ENCODE measurements at regions of chr7 and their contacts with region 1.

Region 1: DNA sequence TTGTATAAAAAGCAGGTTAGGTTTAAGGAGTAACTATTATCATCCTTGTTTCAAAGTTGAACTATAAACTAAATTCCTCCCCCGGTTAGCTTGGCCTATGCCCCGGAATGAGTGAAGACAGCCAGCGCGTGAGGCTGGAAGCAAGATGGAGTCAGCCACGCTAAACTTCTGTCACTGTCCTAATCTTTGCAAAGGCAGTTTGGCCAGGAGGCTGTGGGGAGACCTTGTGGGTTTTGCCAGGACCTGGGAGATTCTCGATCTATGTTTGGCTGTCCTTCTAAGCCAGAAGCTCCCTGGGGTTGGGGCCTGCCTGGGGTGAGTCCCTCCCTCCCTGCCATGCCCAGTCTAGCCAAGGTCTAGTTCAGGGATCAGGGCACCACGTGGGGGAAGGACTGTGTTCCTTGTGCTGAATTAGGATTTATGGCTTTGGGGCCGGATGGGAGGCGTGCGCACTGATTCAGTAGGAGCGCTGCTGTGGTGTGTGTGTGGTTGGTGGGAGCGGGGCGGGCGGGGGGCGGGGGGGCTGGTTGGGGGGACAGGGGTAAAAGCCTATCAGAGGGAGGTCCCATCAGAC is 871 bp upstream of the GTF2IRD1 start:
- DNase-seq: no peak
- H3K4me3 Mint-ChIP-seq: peak overlapping the region; percentile 70
- H3K27ac Mint-ChIP-seq: peak overlapping the region; percentile 88
- H3K4me1 Mint-ChIP-seq: no peaks in the 10 kb centered on the region
- H3K27me3 Mint-ChIP-seq: peaks cover 13% of the 10 kb centered on the region
- CTCF ChIP-seq: no peak

Region 2: DNA sequence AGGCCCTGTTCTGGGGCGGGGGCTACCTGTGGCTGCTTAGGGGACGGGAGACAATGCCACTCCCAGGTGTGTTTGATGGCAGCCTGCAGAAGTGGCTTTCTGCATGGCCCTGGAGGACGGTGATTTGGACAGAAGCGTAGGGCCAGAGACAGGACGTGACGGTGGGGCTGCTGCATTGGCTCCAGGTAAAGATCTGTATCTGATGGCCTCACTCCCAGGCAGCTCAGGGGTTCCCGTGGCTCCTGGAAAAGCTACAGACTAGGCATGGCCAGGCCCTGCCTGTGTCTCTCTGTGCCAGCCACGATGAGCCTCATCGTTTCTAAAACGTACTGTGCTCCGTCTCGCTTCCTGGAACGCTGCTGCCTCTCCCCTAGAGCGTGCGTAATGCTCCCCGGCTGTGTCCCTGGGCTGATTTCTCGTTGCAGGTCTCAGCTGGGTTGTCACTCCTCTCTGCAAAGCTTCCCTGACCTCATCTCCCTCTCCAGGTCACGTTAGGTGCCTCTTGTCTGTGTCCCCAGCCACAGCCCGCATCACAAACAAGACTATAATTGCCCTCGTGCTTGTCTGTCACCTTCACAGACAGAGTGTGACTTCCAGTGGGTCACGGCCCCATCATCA is 13.5 kb after region 1 on chr7:
- CTCF ChIA-PET with region 1: interaction called, 10 read pairs
- intact Hi-C with region 1: no loop called
- DNase-seq: no peak
- H3K4me3 Mint-ChIP-seq: no peak overlapping the region
- H3K27ac Mint-ChIP-seq: peak overlapping the region; percentile 64
- H3K4me1 Mint-ChIP-seq: peaks cover 9% of the 10 kb centered on the region
- H3K27me3 Mint-ChIP-seq: no peaks in the 10 kb centered on the region
- CTCF ChIP-seq: no peak

Region 3: DNA sequence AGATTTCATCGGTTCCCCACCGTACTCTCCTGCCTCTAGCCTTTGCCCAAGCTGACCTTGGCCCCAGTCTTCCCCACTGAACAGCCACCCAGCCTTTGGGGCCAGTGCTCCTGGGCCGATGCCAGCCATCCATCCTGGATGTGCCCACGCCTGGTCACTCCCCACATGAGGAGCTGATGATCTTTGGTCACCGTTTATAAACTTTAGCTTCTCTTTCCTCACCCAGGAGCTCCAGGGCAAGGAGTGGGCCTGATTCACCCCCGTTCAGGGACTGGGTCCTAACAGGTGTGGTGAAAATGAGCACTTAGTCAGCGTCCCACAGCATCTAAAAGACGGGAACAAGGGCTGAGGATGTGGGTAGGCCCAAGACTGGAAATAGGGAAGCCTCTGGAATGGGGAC is 23.8 kb after region 1 on chr7:
- CTCF ChIA-PET with region 1: no interaction called
- intact Hi-C with region 1: no loop called
- DNase-seq: no peak
- H3K4me3 Mint-ChIP-seq: peak overlapping the region; percentile 13
- H3K27ac Mint-ChIP-seq: peak overlapping the region; percentile 90
- H3K4me1 Mint-ChIP-seq: peaks cover 36% of the 10 kb centered on the region
- H3K27me3 Mint-ChIP-seq: no peaks in the 10 kb centered on the region
- CTCF ChIP-seq: no peak